Mucosa of descending colon (tissue), 3 donors: ENCODE measurements at regions of chr5 and their contacts with region 1.

Region 1: DNA sequence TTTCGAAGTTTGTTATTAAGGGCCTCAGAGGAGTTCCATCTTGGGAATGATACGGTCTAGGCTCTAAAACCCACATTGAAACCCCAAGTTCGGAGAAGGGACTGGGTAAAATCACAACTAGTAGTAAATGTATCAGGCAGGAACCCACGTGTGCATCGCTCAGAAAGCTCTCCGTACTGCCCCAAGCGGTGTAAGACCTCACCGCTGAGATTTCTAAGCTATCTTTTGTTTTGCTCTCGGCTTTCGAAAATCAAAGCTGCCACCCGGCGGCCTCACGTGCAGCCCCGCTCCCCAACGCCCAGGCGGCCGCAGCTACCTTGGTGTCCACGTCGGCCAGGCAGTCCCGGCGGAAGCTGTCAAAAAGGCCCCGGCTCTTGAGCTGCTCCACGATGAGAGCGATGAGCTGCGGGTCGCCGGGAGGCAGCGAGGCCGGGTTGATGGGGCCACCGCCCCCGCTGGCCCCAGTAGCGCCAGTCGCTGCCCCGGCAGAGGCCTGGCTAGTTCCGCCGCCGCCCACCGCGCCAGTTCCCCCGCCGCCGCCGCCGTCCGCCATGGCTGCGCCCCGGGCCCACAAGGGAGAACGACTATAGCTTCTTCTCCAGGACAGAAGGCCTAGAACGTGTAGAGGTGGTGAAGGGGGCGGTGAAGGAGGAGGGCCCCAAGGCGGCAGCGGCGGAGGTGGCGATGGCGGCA is 420 bp downstream of the BOD1 start:
- DNase-seq: peak; percentile 71 to 80 (median 80)
- ATAC-seq: peak; percentile 79
- H3K4me3 ChIP-seq: peak overlapping the region; percentile 95
- H3K4me1 ChIP-seq: peaks cover 13% of the 10 kb centered on the region
- CTCF ChIP-seq: peak; percentile 57

Region 2: DNA sequence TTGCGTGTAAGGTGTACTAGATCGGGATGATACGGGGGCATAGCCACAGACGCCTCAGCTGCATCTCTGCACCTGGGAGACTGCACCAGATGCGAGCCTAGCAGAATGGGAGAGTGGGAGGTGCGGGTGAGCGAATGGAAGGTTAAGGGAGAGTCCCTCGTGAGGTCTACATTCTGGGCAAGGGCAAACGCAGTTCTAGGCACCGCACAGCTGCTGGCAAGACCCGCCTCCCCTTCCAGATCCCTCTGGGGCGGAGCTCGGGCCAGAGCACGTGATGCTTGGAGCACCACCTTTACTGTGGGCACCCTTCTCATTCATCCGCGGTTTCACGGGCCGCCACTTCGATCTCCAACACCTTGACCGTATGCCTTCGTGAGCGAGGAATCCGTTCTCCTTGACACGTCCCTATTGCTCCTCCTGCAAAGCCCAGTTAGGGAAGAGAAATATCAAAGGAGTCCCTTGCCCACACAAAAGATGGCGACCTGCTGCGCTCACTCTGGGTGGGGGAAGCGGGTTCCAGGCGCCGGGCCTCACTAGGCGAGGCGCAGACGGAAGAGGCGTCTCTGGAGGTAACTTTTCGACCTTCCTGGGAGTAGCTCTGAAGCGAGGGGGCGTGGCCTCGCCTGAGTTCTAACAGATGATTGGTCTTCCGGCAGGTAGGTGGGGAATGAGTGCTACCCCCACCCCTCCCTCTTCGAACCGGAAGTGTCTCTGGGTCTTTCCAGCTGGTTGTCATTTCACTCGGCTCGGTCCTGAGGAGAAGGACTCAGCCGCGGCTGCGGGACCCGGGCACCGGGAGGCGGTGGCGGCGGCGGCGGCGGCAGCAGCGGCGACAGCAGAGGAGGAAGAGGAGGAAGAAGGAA is 271.8 kb after region 1 on chr5 and contains the start of gene CPEB4:
- intact Hi-C with region 1: loop called in 1 of 2 experiments (anchors 5 kb)
- DNase-seq: peak; percentile 97 to 99 (median 99)
- ATAC-seq: peak; percentile 90
- H3K4me3 ChIP-seq: peak within 1 kb of the TSS; percentile 88
- H3K4me1 ChIP-seq: peaks cover 50% of the 10 kb centered on the region
- CTCF ChIP-seq: no peak
- total RNA-seq, gene CPEB4: 31.8 to 51.3 (median 32.1) TPM

Region 3: GRCh38 chr5:173972925-173973615 is 357.0 kb after region 1 on chr5:
- intact Hi-C with region 1: loop called (anchors 2 to 5 kb)
- DNase-seq: peak; percentile 64 to 92 (median 81)
- ATAC-seq: peak; percentile 96
- H3K4me3 ChIP-seq: no peak overlapping the region
- H3K4me1 ChIP-seq: peaks cover 7% of the 10 kb centered on the region
- CTCF ChIP-seq: peak; percentile 77

Region 4: GRCh38 chr5:174311531-174312269 is 695.7 kb after region 1 on chr5:
- intact Hi-C with region 1: loop called in 1 of 2 experiments (anchors 10 kb)
- DNase-seq: peak; percentile 60 to 75 (median 73)
- ATAC-seq: peak; percentile 81
- H3K4me3 ChIP-seq: no peak overlapping the region
- H3K4me1 ChIP-seq: no peaks in the 10 kb centered on the region
- CTCF ChIP-seq: peak; percentile 70